Naive thymus-derived CD4-positive, alpha-beta T cell (primary cell): ENCODE measurements at regions of chr6 and their contacts with region 1.

Region 1: DNA sequence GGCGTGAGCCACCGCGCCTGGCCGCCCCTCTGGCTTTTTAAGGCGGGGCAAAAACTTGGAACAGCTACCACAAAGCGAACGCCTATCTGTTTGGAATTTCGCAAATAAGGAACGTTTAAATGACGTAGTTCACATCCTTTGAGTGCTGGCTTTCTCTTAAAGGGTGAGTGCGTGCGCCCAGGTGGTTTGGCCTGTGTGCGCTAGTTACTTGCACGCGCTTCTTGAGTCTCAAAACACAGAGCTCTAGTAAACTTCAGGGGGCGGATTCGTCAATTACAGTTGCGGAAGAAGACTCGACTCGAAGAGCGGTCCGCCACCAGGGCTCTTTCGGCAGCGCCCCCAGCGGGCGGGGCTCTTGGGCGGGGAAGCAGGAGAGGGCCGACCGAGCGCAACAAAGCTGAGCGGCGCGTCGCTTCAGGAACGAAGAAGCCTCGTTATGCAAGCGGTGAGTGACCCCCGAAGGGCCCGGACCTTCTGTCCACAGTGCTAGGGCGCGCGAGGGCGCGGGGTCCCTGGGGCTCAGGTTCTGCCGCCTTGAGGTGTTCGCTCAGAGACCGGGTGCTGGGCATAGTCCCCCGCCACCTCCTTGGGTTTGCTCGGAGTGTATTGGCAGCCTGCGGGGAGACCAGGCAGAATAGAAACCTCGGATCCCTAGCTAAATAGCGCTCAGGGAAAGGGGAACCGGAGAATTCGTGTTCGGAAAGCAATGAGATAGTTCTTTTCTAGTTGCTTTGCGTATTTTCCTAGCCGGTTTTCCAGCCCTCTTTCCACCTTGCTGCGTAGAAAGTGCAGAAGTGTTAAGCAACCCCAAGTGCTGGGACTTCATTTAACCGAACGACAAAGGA is at the start of gene SYCP2L:
- DNase-seq: peak in 1 of 9 donors; percentile 14
- ATAC-seq: peak; percentile 18
- H3K4me3 ChIP-seq: no peak within 1 kb of the TSS
- H3K4me3 Mint-ChIP-seq: peak within 1 kb of the TSS; percentile 12 to 82 (median 69)
- H3K27ac ChIP-seq: no peak within 1 kb of the TSS
- H3K27ac Mint-ChIP-seq: no peak within 1 kb of the TSS
- H3K4me1 ChIP-seq: no peaks in the 10 kb centered on the region
- H3K4me1 Mint-ChIP-seq: peaks cover 0 to 29% (median 14%) of the 10 kb centered on the region in 7 donors
- H3K27me3 ChIP-seq: peaks cover 0 to 10% of the 10 kb centered on the region in 2 donors
- H3K27me3 Mint-ChIP-seq: peaks cover 66 to 88% (median 87%) of the 10 kb centered on the region in 5 donors
- total RNA-seq, gene SYCP2L: 0.20 to 0.40 TPM in 2 of 5 experiments, not detected in the others

Region 2: GRCh38 chr6:10381133-10381829 is 505.6 kb before region 1 on chr6:
- CTCF ChIA-PET with region 1: no interaction called
- POLR2A ChIA-PET with region 1: no interaction called
- intact Hi-C with region 1: loop called in 1 of 2 experiments (anchors 5 kb)
- DNase-seq: no peak
- ATAC-seq: no peak
- H3K4me3 ChIP-seq: no peak overlapping the region
- H3K4me3 Mint-ChIP-seq: peak overlapping the region in 2 of 10 donors; percentile 10 to 25
- H3K27ac ChIP-seq: no peak overlapping the region
- H3K27ac Mint-ChIP-seq: no peak overlapping the region
- H3K4me1 ChIP-seq: no peaks in the 10 kb centered on the region
- H3K4me1 Mint-ChIP-seq: peaks cover 4 to 29% (median 16%) of the 10 kb centered on the region in 7 donors
- H3K27me3 ChIP-seq: peaks cover 3 to 20% of the 10 kb centered on the region in 2 donors
- H3K27me3 Mint-ChIP-seq: peaks cover 67 to 78% (median 73%) of the 10 kb centered on the region in 5 donors

Region 3: DNA sequence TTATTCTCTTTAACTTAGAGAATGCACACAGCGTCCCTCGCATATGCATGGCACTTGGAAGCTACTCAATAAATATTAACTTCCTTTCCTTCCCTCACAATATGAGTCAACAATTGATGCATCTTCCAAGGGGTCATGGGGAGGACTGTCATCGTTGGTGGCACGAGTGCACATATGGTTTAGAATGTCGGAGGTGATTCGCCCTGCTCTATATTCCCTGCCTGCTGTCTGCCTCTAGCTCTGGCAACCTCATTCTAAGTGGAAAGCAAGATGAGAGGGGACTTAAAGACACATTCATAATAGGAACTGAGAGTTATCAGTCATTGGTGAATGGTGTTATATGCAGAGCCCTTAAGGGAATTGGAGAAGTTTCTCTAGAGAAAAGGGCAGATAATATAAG is 93.2 kb before region 1 on chr6:
- CTCF ChIA-PET with region 1: no interaction called
- POLR2A ChIA-PET with region 1: no interaction called
- intact Hi-C with region 1: no loop called
- DNase-seq: no peak
- ATAC-seq: no peak
- H3K4me3 ChIP-seq: no peak overlapping the region
- H3K4me3 Mint-ChIP-seq: no peak overlapping the region
- H3K27ac ChIP-seq: no peak overlapping the region
- H3K27ac Mint-ChIP-seq: no peak overlapping the region
- H3K4me1 ChIP-seq: no peaks in the 10 kb centered on the region
- H3K4me1 Mint-ChIP-seq: peaks cover 0 to 2% (median 0%) of the 10 kb centered on the region in 7 donors
- H3K27me3 ChIP-seq: no peaks in the 10 kb centered on the region
- H3K27me3 Mint-ChIP-seq: no peaks in the 10 kb centered on the region

Region 4: GRCh38 chr6:10854922-10855632 is 31.8 kb before region 1 on chr6:
- CTCF ChIA-PET with region 1: no interaction called
- POLR2A ChIA-PET with region 1: no interaction called
- intact Hi-C with region 1: no loop called
- DNase-seq: no peak
- ATAC-seq: no peak
- H3K4me3 ChIP-seq: no peak overlapping the region
- H3K4me3 Mint-ChIP-seq: no peak overlapping the region
- H3K27ac ChIP-seq: no peak overlapping the region
- H3K27ac Mint-ChIP-seq: no peak overlapping the region
- H3K4me1 ChIP-seq: no peaks in the 10 kb centered on the region
- H3K4me1 Mint-ChIP-seq: peaks cover 0 to 3% (median 0%) of the 10 kb centered on the region in 7 donors
- H3K27me3 ChIP-seq: no peaks in the 10 kb centered on the region
- H3K27me3 Mint-ChIP-seq: peaks cover 0 to 28% (median 12%) of the 10 kb centered on the region in 5 donors